CD8-positive, alpha-beta T cell (primary cell): ENCODE measurements at regions of chr9 and their contacts with region 1.

Region 1: DNA sequence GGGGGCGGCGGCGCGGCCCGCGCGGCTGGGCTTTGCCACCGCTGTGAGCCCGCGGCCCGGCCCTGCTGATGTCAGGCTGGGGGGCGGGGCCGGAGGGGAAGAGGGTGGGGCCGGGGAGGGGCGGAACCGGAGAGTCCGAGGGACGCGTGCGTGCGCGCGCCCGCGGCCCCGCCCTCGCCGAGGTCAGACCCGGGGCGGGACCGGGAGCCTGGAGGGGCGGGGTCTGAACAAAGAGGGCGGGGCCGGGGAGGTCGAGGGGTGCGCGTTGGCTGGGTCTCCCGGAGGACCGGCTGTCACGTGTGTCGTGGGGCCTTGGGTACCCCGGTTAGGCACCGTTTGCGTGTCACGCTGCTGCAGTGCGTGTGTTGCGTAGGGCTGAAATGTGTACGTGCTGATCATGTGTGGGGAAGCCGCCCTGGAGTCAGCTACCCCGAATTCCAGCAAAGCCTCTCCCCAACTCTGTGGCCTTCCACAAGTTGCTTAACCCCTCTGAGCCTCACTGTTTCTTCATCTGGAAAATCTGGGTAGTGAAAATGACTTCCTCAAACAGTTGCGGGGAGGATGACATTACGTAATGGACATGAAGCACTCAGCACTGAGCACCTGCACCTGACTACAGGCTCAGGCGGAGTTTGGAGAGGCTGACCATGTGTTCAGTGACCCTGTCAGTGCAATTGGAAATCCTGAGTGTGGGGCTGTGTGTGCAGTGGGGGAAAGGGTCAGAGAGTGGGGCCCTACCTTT is at the start of gene RALGDS:
- DNase-seq: peak; percentile 84 to 95 (median 92)
- ATAC-seq: peak; percentile 83
- H3K4me3 ChIP-seq: peak within 1 kb of the TSS; percentile 41 to 53
- H3K4me3 Mint-ChIP-seq: peak within 1 kb of the TSS; percentile 84
- H3K27ac ChIP-seq: peak within 1 kb of the TSS; percentile 66 to 96
- H3K27ac Mint-ChIP-seq: peak within 1 kb of the TSS; percentile 98
- H3K4me1 ChIP-seq: peaks cover 63% of the 10 kb centered on the region
- H3K4me1 Mint-ChIP-seq: peaks cover 70% of the 10 kb centered on the region
- H3K27me3 ChIP-seq: no peaks in the 10 kb centered on the region
- H3K27me3 Mint-ChIP-seq: no peaks in the 10 kb centered on the region
- CTCF ChIP-seq: no peak
- total RNA-seq, gene RALGDS: 177 to 186 TPM

Region 2: GRCh38 chr9:133133681-133134418 is 12.5 kb after region 1 on chr9:
- CTCF ChIA-PET with region 1: interaction called, 11 read pairs
- POLR2A ChIA-PET with region 1: interaction called, 8 read pairs
- intact Hi-C with region 1: loop called (anchors 1 kb)
- DNase-seq: peak; percentile 85 to 98 (median 92)
- ATAC-seq: peak; percentile 75
- H3K4me3 ChIP-seq: peak overlapping the region in 1 of 2 experiments; percentile 23
- H3K4me3 Mint-ChIP-seq: peak overlapping the region; percentile 72
- H3K27ac ChIP-seq: peak overlapping the region; percentile 92 to 100
- H3K27ac Mint-ChIP-seq: peak overlapping the region; percentile 99
- H3K4me1 ChIP-seq: peaks cover 67% of the 10 kb centered on the region
- H3K4me1 Mint-ChIP-seq: peaks cover 66% of the 10 kb centered on the region
- H3K27me3 ChIP-seq: no peaks in the 10 kb centered on the region
- H3K27me3 Mint-ChIP-seq: no peaks in the 10 kb centered on the region
- CTCF ChIP-seq: no peak

Region 3: DNA sequence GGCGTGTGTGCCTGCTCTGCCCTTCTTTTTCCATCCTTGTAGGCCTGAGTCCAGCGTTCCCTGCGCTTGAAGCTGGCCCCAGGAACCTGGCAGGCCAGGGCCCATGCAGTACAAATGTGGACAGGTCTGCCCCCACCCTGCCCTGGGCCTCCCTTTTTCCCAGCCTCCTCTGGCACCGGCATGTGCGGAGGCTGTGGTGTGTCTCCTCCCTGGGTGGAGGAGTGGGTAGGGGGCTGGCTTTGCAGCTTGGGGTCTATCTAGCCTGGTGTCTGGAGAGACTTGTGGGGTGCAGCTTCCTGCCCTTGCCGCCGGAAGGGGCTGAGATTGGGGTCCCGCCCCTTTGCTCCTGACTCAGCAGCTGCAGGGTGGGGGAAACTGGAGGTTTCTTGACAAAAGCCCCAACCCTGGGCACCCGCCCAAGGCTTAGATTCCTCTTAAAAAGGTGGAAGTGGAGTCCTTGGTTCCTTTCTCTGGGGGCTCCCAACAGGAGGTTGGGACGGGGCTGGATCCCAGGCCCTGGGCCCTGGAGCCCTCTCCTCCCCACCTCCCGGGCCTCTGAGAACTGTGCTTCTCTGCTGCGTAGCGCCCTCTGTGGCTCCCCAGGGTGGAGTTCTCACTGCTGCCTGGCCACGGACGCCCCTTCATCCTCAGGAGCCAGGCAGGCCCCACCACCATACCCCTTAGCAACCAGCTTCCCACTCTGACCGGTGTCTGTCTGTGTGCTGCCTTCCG is 1222.9 kb after region 1 on chr9:
- CTCF ChIA-PET with region 1: no interaction called
- POLR2A ChIA-PET with region 1: no interaction called
- intact Hi-C with region 1: no loop called
- DNase-seq: peak in 8 of 9 experiments; percentile 18 to 69 (median 48)
- ATAC-seq: peak; percentile 67
- H3K4me3 ChIP-seq: no peak overlapping the region
- H3K4me3 Mint-ChIP-seq: peak overlapping the region; percentile 22
- H3K27ac ChIP-seq: peak overlapping the region in 1 of 2 experiments; percentile 16
- H3K27ac Mint-ChIP-seq: no peak overlapping the region
- H3K4me1 ChIP-seq: peaks cover 15% of the 10 kb centered on the region
- H3K4me1 Mint-ChIP-seq: peaks cover 17% of the 10 kb centered on the region
- H3K27me3 ChIP-seq: no peaks in the 10 kb centered on the region
- H3K27me3 Mint-ChIP-seq: no peaks in the 10 kb centered on the region
- CTCF ChIP-seq: no peak